ENCODE measurements at regions of chr11 and their contacts with region 1.

Region 1: GRCh38 chr11:78574386-78575381 is at the start of gene NARS2:
- DNase-seq: peak; percentile 95 to 99
- H3K4me3 ChIP-seq: peak within 1 kb of the TSS; percentile 82
- H3K4me1 ChIP-seq: peaks cover 19% of the 10 kb centered on the region; the same call in 1 of the 2 replicates
- H3K27me3 ChIP-seq: no peaks in the 10 kb centered on the region

Region 2: GRCh38 chr11:77776455-77776854 is 798.2 kb before region 1 on chr11:
- in situ Hi-C with region 1: loop called (anchors 25 kb)
- DNase-seq: peak in 1 of 2 experiments; percentile 28
- H3K4me3 ChIP-seq: no peak overlapping the region
- H3K4me1 ChIP-seq: no peaks in the 10 kb centered on the region; the same call in 1 of the 2 replicates
- H3K27me3 ChIP-seq: no peaks in the 10 kb centered on the region

Region 3: GRCh38 chr11:78079232-78080083 is 495.2 kb before region 1 on chr11 and contains the start of gene NDUFC2:
- in situ Hi-C with region 1: loop called (anchors 25 kb)
- DNase-seq: peak; percentile 69 to 84
- H3K4me3 ChIP-seq: peak within 1 kb of the TSS; percentile 90
- H3K4me1 ChIP-seq: peaks cover 14% of the 10 kb centered on the region
- H3K27me3 ChIP-seq: no peaks in the 10 kb centered on the region

Measured in HAP-1 (cell line).